Brain microvascular endothelial cell (primary cell): ENCODE measurements at regions of chr5 and their contacts with region 1.

Region 1: GRCh38 chr5:150234576-150235499 is 45.0 kb downstream of the SLC6A7 start:
- DNase-seq: no peak
- H3K4me3 ChIP-seq: no peak overlapping the region
- H3K27ac ChIP-seq: no peak overlapping the region
- H3K27me3 ChIP-seq: no peaks in the 10 kb centered on the region
- CTCF ChIP-seq: no peak

Region 2: GRCh38 chr5:150161242-150162141 is 73.3 kb before region 1 on chr5:
- in situ Hi-C with region 1: loop called (anchors 5 kb)
- DNase-seq: peak; percentile 77
- H3K4me3 ChIP-seq: no peak overlapping the region
- H3K27ac ChIP-seq: peak overlapping the region; percentile 80
- H3K27me3 ChIP-seq: no peaks in the 10 kb centered on the region
- CTCF ChIP-seq: peak; percentile 98

Region 3: GRCh38 chr5:150339165-150339564 is 104.3 kb after region 1 on chr5:
- in situ Hi-C with region 1: no loop called
- DNase-seq: no peak
- H3K4me3 ChIP-seq: no peak overlapping the region
- H3K27ac ChIP-seq: no peak overlapping the region
- H3K27me3 ChIP-seq: no peaks in the 10 kb centered on the region
- CTCF ChIP-seq: no peak

Region 4: DNA sequence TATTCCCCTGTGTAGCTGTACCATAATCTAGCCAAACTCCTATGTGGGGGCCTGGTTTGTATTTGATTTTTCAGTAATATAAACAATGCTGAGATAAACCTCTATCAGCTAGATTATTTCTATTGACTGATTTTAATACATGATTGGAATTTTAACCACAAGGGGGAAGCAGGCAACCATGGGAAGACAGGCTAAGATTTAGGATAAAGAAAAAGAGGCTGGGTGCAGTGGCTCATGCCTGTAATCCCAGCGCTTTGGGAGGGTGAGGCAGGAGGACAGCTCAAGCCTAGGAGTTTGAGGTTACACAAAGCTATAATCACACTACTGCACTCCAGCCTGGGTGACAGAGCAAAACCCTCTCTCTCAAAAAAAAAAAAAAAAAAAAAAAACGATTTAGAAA is 767.4 kb after region 1 on chr5:
- in situ Hi-C with region 1: no loop called
- DNase-seq: peak; percentile 44
- H3K4me3 ChIP-seq: no peak overlapping the region
- H3K27ac ChIP-seq: no peak overlapping the region
- H3K27me3 ChIP-seq: no peaks in the 10 kb centered on the region
- CTCF ChIP-seq: peak; percentile 50